Transverse colon (tissue), 4 donors: ENCODE measurements at regions of chr10 and their contacts with region 1.

Region 1: GRCh38 chr10:114653926-114654325 is 4.1 kb downstream of the ABLIM1 start:
- DNase-seq: no peak
- H3K4me3 ChIP-seq: no peak overlapping the region
- H3K27ac ChIP-seq: no peak overlapping the region
- H3K4me1 ChIP-seq: peaks cover 0 to 49% (median 19%) of the 10 kb centered on the region in 4 donors
- H3K27me3 ChIP-seq: no peaks in the 10 kb centered on the region
- CTCF ChIP-seq: no peak
- EP300 ChIP-seq: no peak
- POLR2A ChIP-seq: no peak

Region 2: GRCh38 chr10:113993489-113993991 is 660.4 kb before region 1 on chr10:
- in situ Hi-C with region 1: no loop called
- intact Hi-C with region 1: loop called (anchors 10 kb)
- DNase-seq: no peak
- H3K4me3 ChIP-seq: no peak overlapping the region
- H3K27ac ChIP-seq: peak overlapping the region in 2 of 4 donors; percentile 4 to 8
- H3K4me1 ChIP-seq: peaks cover 0 to 13% (median under 1%) of the 10 kb centered on the region in 4 donors
- H3K27me3 ChIP-seq: no peaks in the 10 kb centered on the region
- CTCF ChIP-seq: no peak
- EP300 ChIP-seq: no peak
- POLR2A ChIP-seq: no peak